ENCODE measurements at regions of chr9 and their contacts with region 1.

Region 1: DNA sequence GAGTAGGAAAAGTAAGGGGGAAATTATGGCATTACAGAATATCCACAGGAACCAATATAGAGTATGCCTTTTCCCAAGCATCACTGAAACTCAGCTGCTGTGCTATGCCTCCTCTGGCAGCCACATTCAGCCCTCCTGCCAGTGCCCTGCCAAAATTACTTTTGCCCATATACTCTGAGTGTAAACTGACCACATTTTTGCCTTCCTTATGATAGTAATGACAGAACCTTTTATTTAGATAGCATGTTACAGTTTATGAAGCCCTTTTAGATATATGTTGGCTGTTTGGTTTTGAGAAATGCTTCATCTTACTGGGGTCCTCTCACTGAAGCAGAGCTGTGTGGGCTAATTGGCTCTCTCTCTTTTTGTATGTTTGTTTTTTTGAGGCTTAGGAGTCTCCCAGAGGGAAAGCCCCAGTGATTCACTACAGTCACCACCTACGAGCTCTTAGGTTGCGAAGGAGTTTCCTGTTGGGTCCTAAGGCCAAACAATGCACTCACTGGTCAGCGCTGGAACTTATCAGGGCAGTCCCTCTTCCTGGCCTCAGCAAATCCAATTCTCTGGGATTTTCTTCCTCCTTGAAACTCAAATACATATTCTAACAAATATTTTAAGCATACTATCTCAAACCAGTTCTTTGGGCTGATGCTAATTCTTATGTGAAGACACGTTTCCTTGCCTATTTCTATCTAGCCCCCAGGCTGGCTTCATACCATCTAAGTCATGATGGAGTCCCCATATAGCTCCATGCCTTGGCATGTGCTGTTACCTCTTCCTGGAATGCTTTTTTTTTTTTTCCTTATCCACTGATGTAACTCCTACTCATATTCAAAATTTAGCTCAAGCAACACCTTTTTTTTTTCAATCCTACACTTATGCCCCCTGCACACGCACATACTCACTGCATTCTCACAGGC is 3.7 kb downstream of the PHF24 start:
- DNase-seq: no peak
- ATAC-seq: no peak

Region 2: GRCh38 chr9:35254237-35254636 is 292.4 kb after region 1 on chr9:
- intact Hi-C with region 1: loop called (anchors 5 kb)
- DNase-seq: no peak
- ATAC-seq: no peak

Measured in sciatic nerve (tissue), 2 donors.